MCF 10A (cell line): ENCODE measurements at regions of chr19 and their contacts with region 1.

Region 1: GRCh38 chr19:38335949-38336637 is 463 bp downstream of the CATSPERG start:
- DNase-seq: peak; percentile 98
- H3K4me3 Mint-ChIP-seq: peak overlapping the region; percentile 97
- H3K27ac Mint-ChIP-seq: peak overlapping the region; percentile 88
- H3K4me1 Mint-ChIP-seq: peaks cover 14% of the 10 kb centered on the region
- H3K27me3 Mint-ChIP-seq: no peaks in the 10 kb centered on the region
- CTCF ChIP-seq: no peak

Region 2: GRCh38 chr19:38219221-38219620 is 116.9 kb before region 1 on chr19:
- CTCF ChIA-PET with region 1: no interaction called
- POLR2A ChIA-PET with region 1: no interaction called
- intact Hi-C with region 1: no loop called
- DNase-seq: no peak
- H3K4me3 Mint-ChIP-seq: no peak overlapping the region
- H3K27ac Mint-ChIP-seq: no peak overlapping the region
- H3K4me1 Mint-ChIP-seq: peaks cover 12% of the 10 kb centered on the region
- H3K27me3 Mint-ChIP-seq: no peaks in the 10 kb centered on the region
- CTCF ChIP-seq: no peak

Region 3: DNA sequence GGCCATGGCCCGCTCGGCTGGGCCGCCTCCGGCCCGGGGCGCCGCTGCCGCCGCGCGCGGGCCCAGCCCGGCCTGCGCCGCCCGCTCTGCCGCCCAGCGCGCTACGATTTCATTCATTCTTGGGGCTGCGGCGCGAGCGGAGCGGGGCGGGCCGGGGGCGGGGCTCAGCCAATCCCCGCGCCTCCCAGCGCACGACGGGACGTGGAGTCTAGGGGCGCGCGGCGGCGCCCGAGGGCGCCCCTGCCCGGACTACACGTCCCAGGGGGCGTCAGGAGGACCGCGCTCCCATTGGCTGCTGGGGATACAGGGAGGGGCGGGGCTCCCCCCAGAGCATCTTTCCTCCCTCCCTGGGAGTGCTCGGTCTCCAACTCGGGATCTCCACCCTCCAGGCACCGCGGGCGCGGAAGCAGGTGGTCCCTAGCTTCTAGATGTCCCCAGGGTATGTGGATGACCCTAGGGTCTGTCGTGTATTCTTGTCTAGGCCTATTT is 106.5 kb before region 1 on chr19:
- CTCF ChIA-PET with region 1: interaction called, 23 read pairs
- POLR2A ChIA-PET with region 1: interaction called, 3 read pairs
- intact Hi-C with region 1: loop called (anchors 2 kb)
- DNase-seq: peak; percentile 59
- H3K4me3 Mint-ChIP-seq: no peak overlapping the region
- H3K27ac Mint-ChIP-seq: no peak overlapping the region
- H3K4me1 Mint-ChIP-seq: peaks cover 13% of the 10 kb centered on the region
- H3K27me3 Mint-ChIP-seq: peaks cover 47% of the 10 kb centered on the region
- CTCF ChIP-seq: no peak

Region 4: GRCh38 chr19:38245826-38246498 is 90.1 kb before region 1 on chr19:
- CTCF ChIA-PET with region 1: interaction called, 102 read pairs
- POLR2A ChIA-PET with region 1: interaction called, 13 read pairs
- intact Hi-C with region 1: loop called (anchors 1 kb)
- DNase-seq: no peak
- H3K4me3 Mint-ChIP-seq: no peak overlapping the region
- H3K27ac Mint-ChIP-seq: no peak overlapping the region
- H3K4me1 Mint-ChIP-seq: peaks cover 16% of the 10 kb centered on the region
- H3K27me3 Mint-ChIP-seq: no peaks in the 10 kb centered on the region
- CTCF ChIP-seq: no peak

Region 5: GRCh38 chr19:38304866-38305429 is 31.1 kb before region 1 on chr19:
- CTCF ChIA-PET with region 1: interaction called, 4 read pairs
- POLR2A ChIA-PET with region 1: interaction called, 7 read pairs
- intact Hi-C with region 1: loop called (anchors 2 kb)
- DNase-seq: peak; percentile 99
- H3K4me3 Mint-ChIP-seq: peak overlapping the region; percentile 89
- H3K27ac Mint-ChIP-seq: peak overlapping the region; percentile 91
- H3K4me1 Mint-ChIP-seq: peaks cover 17% of the 10 kb centered on the region
- H3K27me3 Mint-ChIP-seq: no peaks in the 10 kb centered on the region
- CTCF ChIP-seq: no peak

Region 6: GRCh38 chr19:38374429-38375176 is 38.5 kb after region 1 on chr19 and contains the start of gene PSMD8:
- CTCF ChIA-PET with region 1: interaction called, 4 read pairs
- POLR2A ChIA-PET with region 1: interaction called, 37 read pairs
- intact Hi-C with region 1: loop called (anchors 1 kb)
- DNase-seq: peak; percentile 100
- H3K4me3 Mint-ChIP-seq: peak within 1 kb of the TSS; percentile 84
- H3K27ac Mint-ChIP-seq: peak within 1 kb of the TSS; percentile 98
- H3K4me1 Mint-ChIP-seq: peaks cover 19% of the 10 kb centered on the region
- H3K27me3 Mint-ChIP-seq: no peaks in the 10 kb centered on the region
- CTCF ChIP-seq: no peak
- total RNA-seq, gene PSMD8: 289 and 311 TPM in 2 replicates

Region 7: GRCh38 chr19:38417544-38418506 is 81.7 kb after region 1 on chr19:
- CTCF ChIA-PET with region 1: no interaction called
- POLR2A ChIA-PET with region 1: no interaction called
- intact Hi-C with region 1: no loop called
- DNase-seq: peak; percentile 45
- H3K4me3 Mint-ChIP-seq: peak overlapping the region; percentile 42
- H3K27ac Mint-ChIP-seq: no peak overlapping the region
- H3K4me1 Mint-ChIP-seq: peaks cover 10% of the 10 kb centered on the region
- H3K27me3 Mint-ChIP-seq: peaks cover 35% of the 10 kb centered on the region
- CTCF ChIP-seq: no peak

Region 8: GRCh38 chr19:38464421-38465082 is 128.5 kb after region 1 on chr19:
- CTCF ChIA-PET with region 1: no interaction called
- POLR2A ChIA-PET with region 1: no interaction called
- intact Hi-C with region 1: no loop called
- DNase-seq: no peak
- H3K4me3 Mint-ChIP-seq: no peak overlapping the region
- H3K27ac Mint-ChIP-seq: no peak overlapping the region
- H3K4me1 Mint-ChIP-seq: no peaks in the 10 kb centered on the region
- H3K27me3 Mint-ChIP-seq: peaks cover 11% of the 10 kb centered on the region
- CTCF ChIP-seq: no peak

Region 9: DNA sequence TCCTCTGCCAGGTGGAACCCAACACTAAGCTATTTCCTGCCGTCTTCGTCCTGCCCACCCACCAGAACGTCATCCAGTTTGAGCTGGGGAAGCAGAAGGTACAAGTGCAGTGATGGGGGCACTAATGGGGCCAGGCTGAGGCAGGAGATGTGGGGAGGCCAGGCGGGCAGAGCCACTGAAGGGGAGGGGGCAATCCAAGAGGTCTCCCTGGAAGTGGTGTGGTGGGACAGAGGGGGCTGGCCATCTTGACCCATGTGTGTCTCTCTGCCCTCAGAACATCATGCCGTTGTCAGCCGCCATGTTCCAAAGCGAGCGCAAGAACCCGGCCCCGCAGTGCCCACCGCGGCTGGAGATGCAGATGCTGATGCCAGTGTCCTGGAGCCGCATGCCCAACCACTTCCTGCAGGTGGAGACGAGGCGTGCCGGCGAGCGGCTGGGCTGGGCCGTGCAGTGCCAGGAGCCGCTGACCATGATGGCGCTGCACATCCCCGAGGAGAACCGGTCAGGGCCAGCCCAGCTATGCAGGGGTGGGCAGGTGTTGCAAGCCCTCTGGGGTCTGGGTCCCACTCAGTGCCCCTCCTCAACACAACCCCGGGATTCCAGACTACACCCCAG is 147.0 kb after region 1 on chr19:
- CTCF ChIA-PET with region 1: no interaction called
- POLR2A ChIA-PET with region 1: no interaction called
- intact Hi-C with region 1: no loop called
- DNase-seq: no peak
- H3K4me3 Mint-ChIP-seq: no peak overlapping the region
- H3K27ac Mint-ChIP-seq: no peak overlapping the region
- H3K4me1 Mint-ChIP-seq: no peaks in the 10 kb centered on the region
- H3K27me3 Mint-ChIP-seq: peaks cover 27% of the 10 kb centered on the region
- CTCF ChIP-seq: no peak